ENCODE measurements at regions of chr22 and their contacts with region 1.

Region 1: GRCh38 chr22:23281406-23282088 is 101.2 kb downstream of the BCR start:
- DNase-seq: peak; percentile 88
- H3K4me3 ChIP-seq: no peak overlapping the region
- H3K27ac ChIP-seq: peak overlapping the region; percentile 42 to 86 (median 66)
- H3K4me1 ChIP-seq: peaks cover 18 to 37% (median 24%) of the 10 kb centered on the region in 4 donors
- H3K27me3 ChIP-seq: no peaks in the 10 kb centered on the region
- CTCF ChIP-seq: peak; percentile 91 to 97 (median 93)
- EP300 ChIP-seq: no peak
- POLR2A ChIP-seq: no peak

Region 2: GRCh38 chr22:22720201-22720723 is 561.3 kb before region 1 on chr22:
- in situ Hi-C with region 1: no loop called
- intact Hi-C with region 1: no loop called
- DNase-seq: peak; percentile 35
- H3K4me3 ChIP-seq: no peak overlapping the region
- H3K27ac ChIP-seq: peak overlapping the region; percentile 45 to 67 (median 62)
- H3K4me1 ChIP-seq: peaks cover 0 to 12% (median 0%) of the 10 kb centered on the region in 4 donors
- H3K27me3 ChIP-seq: no peaks in the 10 kb centered on the region
- CTCF ChIP-seq: peak; percentile 15 to 47 (median 34)
- EP300 ChIP-seq: no peak
- POLR2A ChIP-seq: no peak

Region 3: DNA sequence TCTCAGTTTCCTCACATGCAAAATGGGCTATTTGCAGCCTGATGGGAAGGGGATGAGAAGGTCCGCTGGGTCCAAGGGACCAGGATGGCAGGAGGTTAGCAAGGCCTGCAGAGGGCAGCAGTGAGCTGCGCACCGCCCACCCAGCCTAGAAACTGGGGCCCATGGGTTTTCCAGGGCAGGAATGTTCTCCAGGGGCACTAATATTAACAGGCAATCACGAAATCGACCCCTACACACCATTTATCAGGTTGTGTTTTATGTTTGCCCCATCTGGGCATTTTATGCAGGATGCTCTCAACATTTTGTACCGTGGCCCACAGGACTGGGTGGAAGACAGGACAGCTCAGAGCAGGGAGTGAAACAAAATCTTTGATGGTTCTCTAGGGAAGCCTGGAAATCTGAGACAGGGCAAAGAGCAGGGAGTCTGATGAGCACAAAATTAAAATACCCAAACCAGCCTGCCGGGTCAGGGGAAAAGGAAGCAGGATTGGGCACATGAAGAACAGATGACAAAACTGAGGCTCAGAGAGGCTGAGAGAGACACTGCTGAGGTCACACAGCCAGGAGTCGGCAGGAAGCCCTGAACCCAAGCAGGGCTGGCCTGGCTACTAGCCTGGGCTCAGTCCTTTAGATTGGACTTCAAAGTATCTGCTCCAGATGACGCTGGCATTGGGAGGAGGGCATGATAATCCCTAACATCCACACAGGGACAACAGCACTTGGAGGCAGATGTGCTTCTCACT is 102.9 kb before region 1 on chr22:
- in situ Hi-C with region 1: loop called (anchors 5 to 10 kb)
- intact Hi-C with region 1: loop called (anchors 2 kb)
- DNase-seq: peak; percentile 72
- H3K4me3 ChIP-seq: no peak overlapping the region
- H3K27ac ChIP-seq: peak overlapping the region; percentile 65 to 84 (median 80)
- H3K4me1 ChIP-seq: peaks cover 10 to 50% (median 39%) of the 10 kb centered on the region in 4 donors
- H3K27me3 ChIP-seq: no peaks in the 10 kb centered on the region
- CTCF ChIP-seq: peak; percentile 95 to 97 (median 96)
- EP300 ChIP-seq: no peak
- POLR2A ChIP-seq: no peak

Region 4: GRCh38 chr22:23315341-23315917 is 33.9 kb after region 1 on chr22:
- in situ Hi-C with region 1: no loop called
- intact Hi-C with region 1: no loop called
- DNase-seq: peak; percentile 78
- H3K4me3 ChIP-seq: no peak overlapping the region
- H3K27ac ChIP-seq: no peak overlapping the region
- H3K4me1 ChIP-seq: no peaks in the 10 kb centered on the region
- H3K27me3 ChIP-seq: no peaks in the 10 kb centered on the region
- CTCF ChIP-seq: peak; percentile 56 to 78 (median 75)
- EP300 ChIP-seq: no peak
- POLR2A ChIP-seq: no peak